ENCODE measurements at regions of chr5 and their contacts with region 1.

Region 1: GRCh38 chr5:40823459-40823858 is 11.6 kb downstream of the RPL37 start:
- DNase-seq: no peak
- ATAC-seq: peak in 1 of 4 experiments; percentile 36
- H3K4me3 ChIP-seq: no peak overlapping the region
- H3K4me3 Mint-ChIP-seq: no peak overlapping the region
- H3K27ac ChIP-seq: no peak overlapping the region
- H3K27ac Mint-ChIP-seq: no peak overlapping the region
- H3K4me1 ChIP-seq: no peaks in the 10 kb centered on the region
- H3K4me1 Mint-ChIP-seq: peaks cover 0 to 4% (median 3%) of the 10 kb centered on the region in 3 donors
- H3K27me3 ChIP-seq: no peaks in the 10 kb centered on the region
- H3K27me3 Mint-ChIP-seq: no peaks in the 10 kb centered on the region

Region 2: DNA sequence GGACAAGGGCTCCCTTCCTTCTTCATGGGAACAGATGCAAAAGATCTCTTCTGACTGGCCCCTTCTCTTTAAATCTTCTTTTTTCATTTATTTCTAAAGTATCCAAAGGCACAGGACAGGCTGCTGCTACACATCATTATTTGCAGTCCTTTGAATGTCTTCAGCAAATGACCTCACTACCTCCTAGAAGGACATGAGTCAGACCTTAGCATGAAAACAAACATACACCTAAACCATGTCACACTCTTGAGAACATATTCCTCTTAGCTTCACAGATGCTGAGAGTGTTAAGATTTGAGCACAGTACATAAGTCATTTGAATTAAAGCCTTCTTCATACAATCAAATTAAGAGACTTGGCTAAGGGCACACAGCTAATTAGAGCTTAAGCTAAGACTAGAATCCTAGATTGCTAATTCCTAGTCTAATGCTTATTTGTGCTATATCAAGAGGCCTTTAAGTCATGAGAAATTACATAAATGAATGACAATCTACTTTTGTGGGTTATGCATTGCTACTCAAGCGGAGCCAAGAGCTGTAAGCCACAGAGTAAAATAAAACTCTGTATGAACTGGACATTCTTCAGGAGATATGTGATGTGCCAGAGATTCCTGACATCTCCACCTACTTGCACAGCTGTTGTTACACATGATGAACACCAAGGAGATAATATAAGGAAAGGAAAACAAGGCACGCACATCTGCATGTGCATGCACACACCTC is 252.9 kb before region 1 on chr5:
- CTCF ChIA-PET with region 1: no interaction called
- POLR2A ChIA-PET with region 1: interaction called in 1 of 2 experiments, 20 read pairs
- DNase-seq: no peak
- ATAC-seq: peak in 1 of 4 experiments; percentile 56
- H3K4me3 ChIP-seq: no peak overlapping the region
- H3K4me3 Mint-ChIP-seq: no peak overlapping the region
- H3K27ac ChIP-seq: no peak overlapping the region
- H3K27ac Mint-ChIP-seq: peak overlapping the region in 1 of 2 donors; percentile 13
- H3K4me1 ChIP-seq: no peaks in the 10 kb centered on the region
- H3K4me1 Mint-ChIP-seq: peaks cover 5 to 14% (median 12%) of the 10 kb centered on the region in 3 donors
- H3K27me3 ChIP-seq: peaks cover 0 to 2% of the 10 kb centered on the region in 2 experiments
- H3K27me3 Mint-ChIP-seq: no peaks in the 10 kb centered on the region

Region 3: DNA sequence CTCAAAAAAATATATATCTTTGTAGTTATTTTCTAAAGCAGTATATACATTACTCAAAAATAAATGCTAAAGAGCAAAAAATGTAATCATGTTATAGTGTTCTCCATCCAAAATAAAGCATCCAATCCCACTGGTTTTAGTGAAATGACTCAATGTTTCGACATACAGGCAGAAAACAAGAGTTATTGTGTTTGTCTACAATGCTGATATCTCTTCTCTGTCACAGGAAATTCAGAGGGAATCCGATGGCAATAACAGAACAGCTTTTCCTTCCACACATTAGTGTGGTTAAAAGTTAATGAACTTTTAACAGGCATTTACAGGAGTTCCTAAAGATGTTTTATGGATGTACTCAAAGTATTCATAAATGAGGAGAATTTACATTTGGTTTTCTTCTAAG is 79.7 kb before region 1 on chr5:
- CTCF ChIA-PET with region 1: no interaction called
- POLR2A ChIA-PET with region 1: interaction called in 1 of 2 experiments, 11 read pairs
- DNase-seq: no peak
- ATAC-seq: no peak
- H3K4me3 ChIP-seq: no peak overlapping the region
- H3K4me3 Mint-ChIP-seq: no peak overlapping the region
- H3K27ac ChIP-seq: no peak overlapping the region
- H3K27ac Mint-ChIP-seq: no peak overlapping the region
- H3K4me1 ChIP-seq: peaks cover 3% of the 10 kb centered on the region in 2 experiments
- H3K4me1 Mint-ChIP-seq: peaks cover 17 to 26% (median 25%) of the 10 kb centered on the region in 3 donors
- H3K27me3 ChIP-seq: no peaks in the 10 kb centered on the region
- H3K27me3 Mint-ChIP-seq: no peaks in the 10 kb centered on the region

Region 4: DNA sequence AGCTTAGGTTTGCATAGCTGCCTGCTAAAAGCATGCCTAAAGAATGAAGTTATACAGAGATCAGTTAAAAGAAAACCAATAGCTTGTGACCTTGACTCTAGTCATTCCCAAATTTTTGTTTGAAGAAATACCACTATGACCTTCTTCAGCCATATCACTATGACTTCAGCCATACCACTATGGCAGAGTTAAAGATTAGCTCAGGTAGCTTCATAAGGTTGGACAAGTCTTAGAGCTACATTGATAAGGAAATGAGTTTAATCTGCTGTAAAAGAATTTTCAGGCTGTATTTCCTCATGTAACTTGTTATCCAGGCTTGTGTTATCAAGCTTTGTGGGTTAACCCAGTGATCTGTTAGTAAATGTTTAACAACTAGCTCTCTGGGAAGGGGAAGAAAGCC is 359.2 kb after region 1 on chr5:
- CTCF ChIA-PET with region 1: no interaction called
- POLR2A ChIA-PET with region 1: no interaction called
- DNase-seq: no peak
- ATAC-seq: no peak
- H3K4me3 ChIP-seq: no peak overlapping the region
- H3K4me3 Mint-ChIP-seq: no peak overlapping the region
- H3K27ac ChIP-seq: no peak overlapping the region
- H3K27ac Mint-ChIP-seq: no peak overlapping the region
- H3K4me1 ChIP-seq: no peaks in the 10 kb centered on the region
- H3K4me1 Mint-ChIP-seq: no peaks in the 10 kb centered on the region
- H3K27me3 ChIP-seq: no peaks in the 10 kb centered on the region
- H3K27me3 Mint-ChIP-seq: no peaks in the 10 kb centered on the region

Measured in T-cell (primary cell).